Dorsolateral prefrontal cortex (tissue), 120 donors: ENCODE measurements at regions of chr1 and their contacts with region 1.

Region 1: DNA sequence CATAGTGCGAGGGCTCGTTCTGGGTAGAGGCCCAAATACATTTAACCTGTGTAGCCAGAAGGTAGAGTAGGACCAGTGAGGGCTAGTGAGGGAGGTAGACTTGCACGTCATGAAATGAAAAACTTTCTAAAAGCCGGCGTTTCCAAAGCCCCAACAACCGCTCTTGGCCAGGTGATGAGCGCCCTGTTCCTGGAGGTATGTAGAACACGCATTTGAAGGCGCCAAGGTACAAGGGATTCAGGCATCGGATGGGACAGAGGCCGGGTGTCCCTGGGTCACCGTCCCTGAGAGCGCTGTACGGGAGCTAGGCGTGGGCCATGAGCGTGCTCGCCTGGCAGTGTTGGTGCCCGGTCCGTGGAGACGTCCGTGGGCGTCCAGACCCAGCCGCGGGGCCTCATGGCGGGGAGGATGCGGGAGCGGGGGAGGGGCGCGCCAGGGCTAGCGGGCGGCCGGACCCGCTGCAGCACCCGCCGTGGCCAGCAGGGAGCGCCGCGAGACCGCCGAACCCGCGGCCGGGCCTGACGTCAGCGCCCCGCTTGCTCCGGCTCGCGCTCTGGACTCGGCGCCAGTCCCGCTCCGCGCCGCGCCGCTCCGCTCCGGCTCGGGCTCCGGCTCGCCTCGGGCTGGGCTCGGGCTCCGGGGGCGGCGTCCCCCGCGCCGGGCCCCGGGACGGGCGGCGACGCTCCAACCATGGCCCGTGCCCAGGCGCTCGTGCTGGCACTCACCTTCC is at the start of gene PTPRU:
- DNase-seq: peak; percentile 44 to 89 (median 76)
- H3K4me3 ChIP-seq: peak within 1 kb of the TSS; percentile 48 to 86 (median 74)
- H3K27ac ChIP-seq: peak within 1 kb of the TSS in 36 of 59 donors; percentile 14 to 82 (median 55)
- H3K27me3 ChIP-seq: no peaks in the 10 kb centered on the region
- CTCF ChIP-seq: peak; percentile 36 to 98 (median 83)
- total RNA-seq, gene PTPRU: 25.6 to 80.6 (median 50.1) TPM

Region 2: DNA sequence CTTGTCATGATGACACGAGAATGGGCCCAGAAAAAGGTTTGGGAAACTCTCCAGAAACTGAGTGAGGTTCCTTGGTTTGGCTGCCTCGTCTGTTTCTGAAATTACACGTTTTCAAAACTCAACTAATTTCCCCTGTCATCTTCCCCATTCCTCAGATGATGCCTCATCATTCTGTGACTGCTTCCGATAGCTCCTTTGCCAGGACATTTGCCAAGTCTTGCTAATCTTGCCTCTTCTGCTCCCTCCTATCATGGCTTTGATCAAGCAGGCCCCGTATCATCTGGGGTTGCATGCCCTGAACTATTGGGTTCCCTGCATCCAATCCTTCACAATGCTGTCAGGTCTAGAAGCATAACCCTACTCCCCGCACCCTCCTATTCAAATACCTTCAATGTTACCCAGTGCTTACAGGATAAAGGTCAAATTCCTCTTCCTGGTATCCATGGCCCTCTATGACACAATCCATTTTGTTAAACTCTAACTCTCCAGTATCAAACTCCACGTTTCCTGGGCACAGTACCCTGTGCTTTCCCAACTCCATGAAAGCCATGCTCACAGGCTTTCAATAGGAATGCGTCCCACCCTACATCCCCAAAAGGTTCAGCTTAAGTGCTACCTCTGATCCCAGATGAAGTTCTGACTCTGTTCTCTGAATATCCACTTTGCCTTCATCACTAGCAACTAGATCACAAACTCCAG is 90.2 kb before region 1 on chr1:
- intact Hi-C with region 1: no loop called
- DNase-seq: no peak
- H3K4me3 ChIP-seq: no peak overlapping the region
- H3K27ac ChIP-seq: no peak overlapping the region
- H3K27me3 ChIP-seq: no peaks in the 10 kb centered on the region
- CTCF ChIP-seq: no peak

Region 3: DNA sequence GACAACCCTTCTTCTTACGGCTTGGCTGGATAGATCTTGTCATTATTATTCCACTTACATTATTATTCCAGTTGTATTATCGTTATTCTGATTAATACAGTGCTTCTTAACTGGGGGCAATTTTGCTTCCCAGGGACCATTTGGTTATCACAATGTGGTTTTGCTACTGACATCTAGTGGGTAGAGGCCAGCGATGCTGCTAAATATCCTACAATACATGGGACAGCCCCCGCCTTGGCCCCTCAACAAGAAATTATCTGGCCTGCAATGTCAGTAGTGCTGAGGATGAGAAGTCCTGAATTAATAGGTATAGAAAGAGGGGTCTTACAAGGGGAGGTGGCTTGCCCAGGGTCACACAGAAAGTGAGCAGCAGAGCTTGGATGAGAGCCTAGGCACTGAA is 105.8 kb after region 1 on chr1:
- intact Hi-C with region 1: loop called in 1 of 2 experiments (anchors 5 kb)
- DNase-seq: no peak
- H3K4me3 ChIP-seq: no peak overlapping the region
- H3K27ac ChIP-seq: peak overlapping the region in 6 of 59 donors; percentile 1 to 47 (median 18)
- H3K27me3 ChIP-seq: peaks cover 0 to 9% (median 0%) of the 10 kb centered on the region in 45 donors
- CTCF ChIP-seq: peak in 4 of 56 donors; percentile 1 to 20 (median 11)

Region 4: DNA sequence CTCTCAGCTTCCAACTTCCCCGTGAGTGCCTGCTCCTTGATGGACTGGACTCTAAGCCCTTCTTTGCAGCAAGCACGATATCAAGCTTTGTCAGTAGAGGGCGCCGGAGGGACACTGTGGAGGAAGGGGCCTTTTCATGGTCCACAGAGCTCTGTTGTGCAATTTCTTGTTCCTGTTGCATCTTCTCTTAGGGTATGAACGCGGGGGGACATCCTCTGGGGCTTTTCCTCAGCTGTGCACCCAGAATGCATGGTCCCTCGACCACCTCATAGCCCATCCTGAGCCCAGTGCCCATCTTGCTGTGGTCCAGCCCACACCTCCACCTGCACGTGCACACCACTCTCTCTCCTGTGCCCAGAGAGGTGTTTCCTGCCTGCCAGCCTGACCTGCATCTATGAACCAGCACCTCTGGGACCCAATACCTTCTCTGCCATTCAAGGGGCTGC is 557.0 kb after region 1 on chr1:
- intact Hi-C with region 1: loop called in 1 of 2 experiments (anchors 2 kb)
- DNase-seq: peak in 9 of 10 donors; percentile 51 to 88 (median 76)
- H3K4me3 ChIP-seq: no peak overlapping the region
- H3K27ac ChIP-seq: no peak overlapping the region
- H3K27me3 ChIP-seq: no peaks in the 10 kb centered on the region
- CTCF ChIP-seq: peak; percentile 27 to 83 (median 72)

Region 5: DNA sequence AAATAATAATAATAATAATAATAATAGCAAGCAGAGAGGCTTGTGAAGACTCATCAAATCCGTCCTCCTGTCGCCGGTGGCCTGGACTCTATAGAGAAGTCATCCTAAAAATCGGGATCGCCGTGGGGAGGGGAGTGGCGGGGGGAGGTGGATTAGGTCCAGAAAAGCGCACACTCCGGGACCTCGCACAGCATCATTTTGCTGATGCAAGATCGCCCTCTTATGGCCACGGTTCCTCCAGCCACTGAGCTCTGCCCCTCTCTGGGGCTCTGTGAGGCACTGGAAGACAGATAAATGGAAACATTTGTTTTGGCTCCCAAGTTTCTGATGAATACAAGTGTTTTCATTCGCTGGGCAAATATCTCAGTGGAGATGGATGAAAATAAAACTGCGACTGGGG is 875.3 kb after region 1 on chr1:
- intact Hi-C with region 1: loop called (anchors 5 to 10 kb)
- DNase-seq: peak in 8 of 10 donors; percentile 43 to 74 (median 61)
- H3K4me3 ChIP-seq: peak overlapping the region in 1 of 59 donors; percentile 17
- H3K27ac ChIP-seq: no peak overlapping the region
- H3K27me3 ChIP-seq: peaks cover 0 to 44% (median 5%) of the 10 kb centered on the region in 45 donors
- CTCF ChIP-seq: peak in 55 of 56 donors; percentile 20 to 80 (median 61)

Region 6: GRCh38 chr1:30379684-30380624 is 1143.8 kb after region 1 on chr1:
- intact Hi-C with region 1: loop called (anchors 5 kb)
- DNase-seq: peak in 6 of 10 donors; percentile 27 to 67 (median 54)
- H3K4me3 ChIP-seq: no peak overlapping the region
- H3K27ac ChIP-seq: peak overlapping the region in 11 of 59 donors; percentile 0 to 58 (median 26)
- H3K27me3 ChIP-seq: peaks cover 0 to 51% (median 2%) of the 10 kb centered on the region in 45 donors
- CTCF ChIP-seq: peak; percentile 69 to 95 (median 82)

Region 7: GRCh38 chr1:30707412-30708360 is 1471.6 kb after region 1 on chr1:
- intact Hi-C with region 1: loop called (anchors 1 to 2 kb)
- DNase-seq: peak; percentile 69 to 91 (median 84)
- H3K4me3 ChIP-seq: no peak overlapping the region
- H3K27ac ChIP-seq: peak overlapping the region in 1 of 59 donors; percentile 44
- H3K27me3 ChIP-seq: no peaks in the 10 kb centered on the region
- CTCF ChIP-seq: peak; percentile 38 to 97 (median 85)